Heart right ventricle (tissue), 16 donors: ENCODE measurements at regions of chr22 and their contacts with region 1.

Region 1: DNA sequence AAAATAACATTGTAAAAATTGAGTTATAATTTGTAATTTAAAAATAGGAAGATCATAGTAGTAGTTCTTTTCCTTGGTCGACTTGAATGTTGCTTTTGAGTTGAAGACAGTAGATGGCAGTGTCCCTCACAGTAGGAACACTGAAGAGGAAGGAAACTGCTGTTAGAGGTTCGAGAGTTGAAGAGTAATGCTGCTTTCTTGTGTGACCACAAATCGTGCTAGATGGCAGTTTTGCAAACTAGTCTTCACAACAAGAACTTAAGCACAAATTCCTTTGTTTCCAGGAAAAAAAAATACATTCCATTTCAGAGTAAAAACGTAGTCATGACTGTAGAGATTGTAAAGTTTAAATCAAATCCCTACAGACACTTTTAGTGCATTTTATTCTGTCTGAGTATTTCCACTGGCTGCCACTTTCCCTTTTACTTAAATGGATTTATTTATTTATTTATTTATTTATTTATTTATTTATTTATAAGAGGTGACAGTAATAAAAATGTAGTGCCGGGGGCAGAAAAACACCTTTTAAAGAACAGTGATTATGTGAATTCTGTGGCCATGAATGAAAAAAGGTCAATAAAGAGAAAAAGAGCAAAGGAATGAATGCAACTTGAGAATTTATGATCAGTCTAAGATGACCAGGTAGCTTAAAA is 54.6 kb downstream of the SPECC1L start:
- DNase-seq: peak in 1 of 2 donors; percentile 53
- ATAC-seq: peak; percentile 70 to 87 (median 78)
- H3K4me3 ChIP-seq: no peak overlapping the region
- H3K27ac ChIP-seq: peak overlapping the region in 1 of 10 donors; percentile 19
- H3K4me1 ChIP-seq: peaks cover 0 to 44% (median 24%) of the 10 kb centered on the region in 9 donors
- H3K27me3 ChIP-seq: no peaks in the 10 kb centered on the region
- CTCF ChIP-seq: peak; percentile 51 to 90 (median 73)

Region 2: GRCh38 chr22:24355574-24355973 is 30.3 kb after region 1 on chr22:
- intact Hi-C with region 1: no loop called
- DNase-seq: no peak
- ATAC-seq: no peak
- H3K4me3 ChIP-seq: no peak overlapping the region
- H3K27ac ChIP-seq: no peak overlapping the region
- H3K4me1 ChIP-seq: peaks cover 8 to 21% (median 14%) of the 10 kb centered on the region in 9 donors
- H3K27me3 ChIP-seq: no peaks in the 10 kb centered on the region
- CTCF ChIP-seq: no peak

Region 3: DNA sequence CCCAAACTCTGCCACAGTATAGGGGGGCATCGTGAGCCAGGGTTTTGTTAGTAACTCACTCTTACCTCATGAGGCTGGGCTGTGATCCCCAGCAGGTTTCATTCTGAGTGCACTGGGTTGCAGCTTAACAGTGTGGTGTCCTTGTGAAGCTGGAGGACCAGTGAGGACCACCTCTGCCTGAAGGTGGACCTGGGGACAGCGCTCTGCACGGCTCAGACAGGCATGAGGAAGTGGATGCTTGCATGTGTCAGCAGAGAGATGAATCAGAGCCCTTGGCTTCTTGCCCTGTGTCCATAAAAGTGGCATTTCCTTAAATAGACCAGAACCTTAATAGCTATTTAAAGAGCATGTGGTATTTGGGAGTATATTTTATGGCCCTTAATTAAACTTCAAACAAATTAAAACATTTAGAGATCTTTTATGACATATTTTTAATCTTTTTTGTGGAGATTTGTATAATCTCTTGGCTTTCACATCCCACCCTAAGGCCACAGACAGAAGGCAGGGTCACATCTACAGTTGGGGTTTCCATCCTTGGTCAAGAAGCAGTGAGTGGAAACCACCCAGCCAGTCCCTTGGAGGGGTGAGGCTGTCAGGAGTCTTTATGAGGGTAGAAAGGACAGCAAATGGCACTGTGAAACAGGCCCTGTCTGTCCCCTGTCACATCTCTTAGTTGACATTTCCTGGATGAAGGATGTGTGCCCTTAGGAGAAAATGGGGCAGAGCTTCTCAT is 77.4 kb after region 1 on chr22:
- intact Hi-C with region 1: loop called in 1 of 10 experiments (anchors 10 kb)
- DNase-seq: peak; percentile 49 to 90
- ATAC-seq: peak; percentile 80 to 92 (median 89)
- H3K4me3 ChIP-seq: peak overlapping the region in 5 of 10 donors; percentile 8 to 29 (median 14)
- H3K27ac ChIP-seq: peak overlapping the region; percentile 62 to 93 (median 85)
- H3K4me1 ChIP-seq: peaks cover 21 to 94% (median 63%) of the 10 kb centered on the region in 9 donors
- H3K27me3 ChIP-seq: no peaks in the 10 kb centered on the region
- CTCF ChIP-seq: no peak

Region 4: DNA sequence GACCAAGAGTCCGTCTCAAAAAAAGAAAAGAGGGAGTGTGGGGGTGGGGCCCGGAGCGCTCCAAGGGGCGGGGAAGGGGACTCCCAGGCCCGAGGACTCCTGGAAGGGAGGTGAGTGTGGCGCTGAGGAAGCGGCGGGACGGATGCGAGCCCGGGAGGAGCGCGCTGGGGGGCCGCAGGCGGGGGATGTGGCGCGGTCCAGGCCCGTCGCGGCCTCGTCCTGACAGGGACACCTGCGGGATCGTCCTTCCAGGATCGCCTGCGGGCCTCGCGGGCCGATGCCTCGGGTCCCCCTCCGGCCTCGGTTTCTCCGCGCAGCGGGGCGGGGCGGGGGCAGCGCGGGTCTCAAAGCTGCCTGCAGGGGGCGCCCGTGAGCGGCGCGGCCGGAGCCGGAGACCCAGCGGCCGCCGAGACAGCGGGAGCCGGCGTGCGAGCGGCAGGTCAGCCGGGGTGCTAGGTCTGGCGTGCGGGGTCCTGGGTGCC is 98.3 kb after region 1 on chr22:
- intact Hi-C with region 1: loop called in 5 of 10 experiments (anchors 2 to 5 kb)
- DNase-seq: peak; percentile 60 to 75
- ATAC-seq: peak; percentile 37 to 79 (median 55)
- H3K4me3 ChIP-seq: peak overlapping the region; percentile 61 to 90 (median 76)
- H3K27ac ChIP-seq: peak overlapping the region in 9 of 10 donors; percentile 63 to 89 (median 73)
- H3K4me1 ChIP-seq: peaks cover 19 to 89% (median 55%) of the 10 kb centered on the region in 9 donors
- H3K27me3 ChIP-seq: peaks cover 0 to 10% (median 0%) of the 10 kb centered on the region in 7 donors
- CTCF ChIP-seq: peak; percentile 82 to 99 (median 92)

Region 5: DNA sequence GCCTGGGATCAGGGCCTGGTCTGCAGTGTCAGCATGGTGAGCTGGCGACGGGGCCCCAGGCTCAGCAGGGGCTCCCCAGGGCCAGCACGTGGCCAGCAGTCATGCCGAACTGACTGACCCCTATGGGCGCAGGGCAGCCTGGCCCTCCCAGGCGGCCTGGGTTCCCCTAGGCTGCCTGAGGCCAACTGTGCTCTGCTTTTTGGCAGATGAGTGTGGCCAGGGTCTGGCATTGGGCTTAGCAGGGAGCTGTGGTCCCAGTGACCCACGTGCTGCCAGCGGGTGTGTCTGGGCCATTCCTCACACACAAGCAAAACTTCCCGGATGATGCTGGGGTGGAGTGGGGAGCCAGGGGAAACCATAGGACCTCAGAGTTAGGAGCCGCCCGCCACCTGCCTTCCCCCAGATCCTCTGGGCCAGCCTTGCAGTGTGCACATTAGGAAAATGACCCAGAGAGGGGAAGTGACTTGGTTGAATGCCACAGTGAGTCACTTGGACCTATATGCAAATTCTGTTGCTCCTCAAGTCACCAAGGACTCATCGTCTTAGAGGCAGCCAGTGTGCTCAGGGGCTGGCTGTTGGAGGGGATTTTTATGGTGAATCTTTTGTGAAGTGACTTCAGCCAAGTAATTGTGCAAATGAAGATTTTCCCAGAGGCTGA is 108.7 kb after region 1 on chr22:
- intact Hi-C with region 1: loop called in 1 of 10 experiments (anchors 10 kb)
- DNase-seq: no peak
- ATAC-seq: peak; percentile 3 to 59 (median 16)
- H3K4me3 ChIP-seq: no peak overlapping the region
- H3K27ac ChIP-seq: peak overlapping the region in 9 of 10 donors; percentile 36 to 91 (median 72)
- H3K4me1 ChIP-seq: peaks cover 41 to 98% (median 76%) of the 10 kb centered on the region in 9 donors
- H3K27me3 ChIP-seq: no peaks in the 10 kb centered on the region
- CTCF ChIP-seq: no peak

Region 6: GRCh38 chr22:24482575-24482974 is 157.3 kb after region 1 on chr22:
- intact Hi-C with region 1: loop called in 1 of 10 experiments (anchors 5 kb)
- DNase-seq: no peak
- ATAC-seq: peak in 1 of 8 donors; percentile 56
- H3K4me3 ChIP-seq: no peak overlapping the region
- H3K27ac ChIP-seq: peak overlapping the region in 1 of 10 donors; percentile 64
- H3K4me1 ChIP-seq: peaks cover 0 to 53% (median 13%) of the 10 kb centered on the region in 9 donors
- H3K27me3 ChIP-seq: no peaks in the 10 kb centered on the region
- CTCF ChIP-seq: no peak

Region 7: DNA sequence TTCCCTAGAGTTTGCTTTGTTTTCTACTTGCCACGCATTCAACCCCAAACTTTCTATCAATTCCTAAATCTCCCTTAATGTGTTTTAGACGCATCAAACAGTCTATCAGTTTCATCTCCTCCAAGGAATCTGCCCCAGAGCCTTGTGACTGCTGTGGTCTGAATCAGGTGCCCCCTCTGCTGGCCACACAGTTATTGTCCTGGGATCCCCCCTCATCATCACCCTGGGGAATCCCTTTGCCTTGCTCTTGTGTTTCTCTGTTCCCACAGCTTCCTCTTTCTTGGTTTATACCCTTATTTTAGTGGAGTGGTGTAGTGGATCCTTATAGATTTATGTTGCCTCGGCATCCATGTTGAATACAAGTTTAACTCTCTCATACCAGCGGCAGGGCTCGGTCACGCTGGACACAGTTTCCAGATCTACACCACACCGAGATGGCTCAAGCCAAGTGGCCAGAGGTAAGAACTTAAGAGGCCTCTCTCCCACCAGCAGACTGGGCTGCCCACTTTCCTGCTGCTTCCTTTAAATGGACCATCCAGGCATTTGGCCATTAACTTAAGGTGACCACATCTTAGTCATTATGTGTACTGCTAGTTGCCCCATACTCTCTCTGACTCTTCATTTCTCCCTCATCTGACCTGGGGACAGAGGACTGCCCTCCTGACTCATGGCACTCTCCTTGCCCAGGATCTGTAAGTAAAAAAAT is 178.1 kb after region 1 on chr22:
- intact Hi-C with region 1: loop called in 3 of 10 experiments (anchors 2 to 5 kb)
- DNase-seq: peak; percentile 65 to 68
- ATAC-seq: peak; percentile 63 to 86 (median 74)
- H3K4me3 ChIP-seq: no peak overlapping the region
- H3K27ac ChIP-seq: peak overlapping the region in 1 of 10 donors; percentile 48
- H3K4me1 ChIP-seq: peaks cover 0 to 47% (median 13%) of the 10 kb centered on the region in 9 donors
- H3K27me3 ChIP-seq: no peaks in the 10 kb centered on the region
- CTCF ChIP-seq: peak; percentile 38 to 78 (median 69)

Region 8: DNA sequence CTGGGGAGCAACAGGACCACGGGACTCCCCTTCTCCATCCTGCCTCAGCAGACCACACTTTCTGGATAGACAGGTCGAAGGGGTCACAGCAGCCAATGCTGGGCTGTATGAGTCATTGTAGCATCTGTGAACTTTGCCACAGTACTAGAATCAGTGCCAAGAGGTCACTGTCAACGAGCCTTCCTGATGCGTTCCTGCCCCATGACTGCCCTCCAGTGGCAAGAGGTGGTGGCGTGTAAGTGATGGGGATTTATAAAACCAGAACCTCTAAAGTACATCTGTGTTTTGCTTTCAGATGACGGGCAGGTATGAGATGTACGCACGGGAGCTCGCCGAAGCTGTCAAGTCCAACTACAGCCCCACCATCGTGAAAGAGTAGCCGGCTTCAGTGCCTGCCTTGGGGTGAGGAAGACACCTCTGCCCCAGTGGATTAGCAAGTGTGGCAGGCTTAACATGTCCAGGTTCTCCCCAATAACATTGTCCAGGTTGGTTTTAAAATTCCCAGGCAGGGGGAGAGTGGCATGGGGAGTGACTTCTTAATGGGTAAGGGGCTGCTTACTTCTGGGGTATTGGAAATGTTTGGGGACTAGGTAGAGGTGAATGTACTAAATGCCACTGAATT is 200.3 kb after region 1 on chr22:
- intact Hi-C with region 1: loop called (anchors 1 to 10 kb)
- DNase-seq: peak; percentile 75 to 76
- ATAC-seq: peak; percentile 71 to 87 (median 79)
- H3K4me3 ChIP-seq: no peak overlapping the region
- H3K27ac ChIP-seq: no peak overlapping the region
- H3K4me1 ChIP-seq: peaks cover 3 to 24% (median 16%) of the 10 kb centered on the region in 9 donors
- H3K27me3 ChIP-seq: no peaks in the 10 kb centered on the region
- CTCF ChIP-seq: peak; percentile 76 to 89 (median 87)